ENCODE measurements at regions of chr10 and their contacts with region 1.

Region 1: DNA sequence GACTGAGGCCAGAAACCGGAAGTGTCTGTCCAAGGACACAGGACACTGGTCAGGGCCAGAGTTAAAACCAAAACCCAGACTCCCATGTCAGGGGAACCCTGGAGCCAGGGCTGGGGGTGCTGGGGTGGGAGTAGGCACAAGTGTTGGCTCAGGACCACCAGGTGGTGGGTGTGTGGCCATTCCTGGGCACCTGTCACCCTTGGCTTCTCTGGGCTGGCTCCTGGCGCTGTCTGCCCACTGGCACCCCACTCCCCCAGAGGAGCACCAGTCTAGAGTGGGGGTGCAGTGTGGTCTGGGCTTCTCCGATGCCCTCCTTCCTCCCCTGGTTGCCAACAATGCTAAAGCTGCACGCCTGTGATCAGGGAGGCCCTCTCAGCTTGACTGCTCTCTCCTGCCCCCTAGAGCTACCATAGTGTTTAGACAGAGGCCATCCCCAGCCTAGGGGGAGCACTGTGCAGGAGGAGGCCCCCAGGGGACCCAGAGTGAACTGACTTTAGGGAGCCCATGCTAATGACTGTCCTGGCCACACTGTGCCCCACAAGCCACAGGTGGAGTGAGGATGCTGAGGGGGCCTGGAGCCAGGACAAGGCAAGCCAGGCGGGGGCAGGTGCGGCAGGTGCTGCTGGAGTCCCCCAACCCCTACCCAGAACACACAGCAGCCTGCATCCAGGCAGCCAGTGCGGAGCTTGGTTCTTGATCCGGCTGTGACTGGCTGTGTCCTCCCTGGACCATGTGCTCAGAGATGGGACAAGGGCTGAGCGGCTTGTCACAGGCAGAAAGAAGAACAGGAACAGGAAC is 11.0 kb downstream of the RASGEF1A start:
- DNase-seq: peak in 1 of 2 experiments; percentile 75
- H3K4me3 ChIP-seq: no peak overlapping the region
- H3K27ac ChIP-seq: no peak overlapping the region
- H3K4me1 ChIP-seq: peaks cover 0 to 7% (median under 1%) of the 10 kb centered on the region in 4 experiments; a peak in 5 of 7 replicates
- H3K27me3 ChIP-seq: no peaks in the 10 kb centered on the region
- CTCF ChIP-seq: peak in 2 of 3 experiments; percentile 85 to 90; a peak in 3 of 4 replicates
- EP300 ChIP-seq: no peak
- POLR2A ChIP-seq: no peak
- RAD21 ChIP-seq: peak; percentile 65 to 74

Region 2: GRCh38 chr10:42988517-42989395 is 267.1 kb before region 1 on chr10:
- CTCF ChIA-PET with region 1: no interaction called
- POLR2A ChIA-PET with region 1: no interaction called
- DNase-seq: peak in 1 of 2 experiments; percentile 37
- H3K4me3 ChIP-seq: no peak overlapping the region
- H3K27ac ChIP-seq: no peak overlapping the region
- H3K4me1 ChIP-seq: no peaks in the 10 kb centered on the region
- H3K27me3 ChIP-seq: no peaks in the 10 kb centered on the region
- CTCF ChIP-seq: no peak
- EP300 ChIP-seq: no peak
- POLR2A ChIP-seq: no peak
- RAD21 ChIP-seq: no peak

Region 3: DNA sequence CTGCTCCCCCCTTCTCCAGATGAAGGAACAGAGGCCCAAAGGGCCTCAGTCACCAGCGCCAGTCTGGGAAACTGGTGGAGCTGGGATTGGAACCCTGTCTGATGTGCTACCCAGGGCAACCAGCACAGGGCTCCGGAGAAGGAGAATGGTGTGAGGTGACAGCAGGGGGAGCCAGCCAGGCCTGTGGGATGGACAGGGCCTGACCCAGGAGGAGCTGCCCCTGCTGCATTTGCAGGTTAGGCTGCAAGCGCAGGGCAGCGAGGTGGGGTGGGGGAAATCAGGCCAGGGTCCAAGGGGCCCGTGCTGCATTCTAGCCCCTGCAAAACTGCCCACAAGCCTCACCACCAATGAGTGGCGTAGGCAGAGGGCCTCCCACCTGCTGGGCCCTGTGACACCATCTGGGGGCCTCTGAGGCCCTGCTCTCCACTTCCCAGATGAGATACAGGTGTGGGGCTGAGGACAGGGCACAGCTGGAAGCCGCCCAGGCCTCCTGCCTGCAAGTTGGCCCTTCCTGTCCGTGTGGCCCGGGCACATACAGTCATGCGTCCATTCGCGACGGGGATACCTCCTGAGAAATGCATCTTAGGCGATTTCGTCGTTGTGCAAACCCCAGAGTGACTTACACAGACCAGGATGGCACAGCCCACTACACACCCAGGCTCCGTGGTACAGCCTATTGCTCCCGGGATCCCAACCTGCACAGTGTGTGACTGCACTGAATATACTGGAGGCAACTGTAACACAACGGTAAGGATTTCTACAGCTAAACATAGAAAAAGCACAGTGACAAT is 34.2 kb before region 1 on chr10:
- CTCF ChIA-PET with region 1: interaction called, 35 read pairs
- POLR2A ChIA-PET with region 1: no interaction called
- DNase-seq: peak in 1 of 2 experiments; percentile 76
- H3K4me3 ChIP-seq: no peak overlapping the region
- H3K27ac ChIP-seq: no peak overlapping the region
- H3K4me1 ChIP-seq: peaks cover 0 to 6% (median 2%) of the 10 kb centered on the region in 4 experiments; a peak in 4 of 7 replicates
- H3K27me3 ChIP-seq: no peaks in the 10 kb centered on the region
- CTCF ChIP-seq: peak; percentile 73 to 78 (median 75)
- EP300 ChIP-seq: no peak
- POLR2A ChIP-seq: no peak
- RAD21 ChIP-seq: peak; percentile 48 to 62

Region 4: DNA sequence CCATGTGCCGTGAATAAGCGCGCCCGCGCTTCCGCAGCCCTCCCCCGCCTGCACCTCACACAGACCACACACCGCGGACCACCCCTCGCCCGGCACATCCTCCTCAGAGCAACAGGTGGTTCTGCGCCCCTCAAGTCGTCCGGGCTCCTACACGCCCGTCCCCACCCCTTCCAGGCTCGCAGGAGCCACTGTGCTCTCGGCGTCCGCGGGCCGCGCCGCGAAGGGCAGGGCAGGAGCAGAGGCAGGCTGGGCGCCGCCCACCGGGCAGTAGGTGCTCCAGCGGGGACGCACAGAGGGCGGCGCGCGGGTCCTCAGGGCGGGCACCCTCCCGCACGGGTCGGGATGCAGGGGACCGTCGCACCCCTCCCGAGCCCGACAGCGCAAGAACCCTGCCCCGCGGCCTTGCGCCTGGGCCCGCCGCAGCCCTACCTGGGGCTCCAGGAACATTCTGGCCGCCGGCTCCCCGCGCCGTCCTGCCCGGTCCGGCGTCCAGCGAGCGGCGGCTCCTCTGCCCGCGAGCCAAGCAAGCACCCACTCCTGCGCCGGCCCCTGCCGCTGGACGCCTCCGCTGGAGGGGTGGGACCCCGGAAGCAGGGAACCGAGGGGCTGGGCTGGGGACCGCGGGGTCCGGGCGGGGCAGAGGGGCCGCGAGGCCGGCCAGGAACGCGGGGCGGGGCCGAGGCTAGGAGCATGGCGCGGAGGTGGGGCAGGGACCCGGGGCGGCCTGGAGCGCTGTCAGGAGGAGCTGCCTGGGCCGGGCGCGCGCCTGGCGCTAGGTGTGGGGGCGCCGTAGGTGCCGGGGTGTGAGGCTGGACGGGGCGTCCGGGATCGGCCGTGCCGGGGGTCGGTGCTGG is 26.4 kb before region 1 on chr10:
- CTCF ChIA-PET with region 1: interaction called, 24 read pairs
- POLR2A ChIA-PET with region 1: interaction called, 4 read pairs
- DNase-seq: peak in 1 of 2 experiments; percentile 85
- H3K4me3 ChIP-seq: peak overlapping the region; percentile 57 to 76 (median 59)
- H3K27ac ChIP-seq: no peak overlapping the region
- H3K4me1 ChIP-seq: peaks cover 0 to 14% (median 7%) of the 10 kb centered on the region in 4 experiments; a peak in 5 of 7 replicates
- H3K27me3 ChIP-seq: peaks cover 19 to 40% (median 39%) of the 10 kb centered on the region in 4 experiments
- CTCF ChIP-seq: no peak
- EP300 ChIP-seq: no peak
- POLR2A ChIP-seq: no peak
- RAD21 ChIP-seq: no peak

Region 5: GRCh38 chr10:43234471-43235041 is 21.3 kb before region 1 on chr10:
- CTCF ChIA-PET with region 1: interaction called, 24 read pairs
- POLR2A ChIA-PET with region 1: interaction called, 4 read pairs
- DNase-seq: no peak
- H3K4me3 ChIP-seq: no peak overlapping the region
- H3K27ac ChIP-seq: no peak overlapping the region
- H3K4me1 ChIP-seq: peaks cover 0 to 8% (median under 1%) of the 10 kb centered on the region in 4 experiments; a peak in 3 of 7 replicates
- H3K27me3 ChIP-seq: peaks cover 7 to 21% (median 18%) of the 10 kb centered on the region in 4 experiments
- CTCF ChIP-seq: no peak
- EP300 ChIP-seq: no peak
- POLR2A ChIP-seq: no peak
- RAD21 ChIP-seq: no peak